T-cell (primary cell): ENCODE measurements at regions of chr12 and their contacts with region 1.

Region 1: DNA sequence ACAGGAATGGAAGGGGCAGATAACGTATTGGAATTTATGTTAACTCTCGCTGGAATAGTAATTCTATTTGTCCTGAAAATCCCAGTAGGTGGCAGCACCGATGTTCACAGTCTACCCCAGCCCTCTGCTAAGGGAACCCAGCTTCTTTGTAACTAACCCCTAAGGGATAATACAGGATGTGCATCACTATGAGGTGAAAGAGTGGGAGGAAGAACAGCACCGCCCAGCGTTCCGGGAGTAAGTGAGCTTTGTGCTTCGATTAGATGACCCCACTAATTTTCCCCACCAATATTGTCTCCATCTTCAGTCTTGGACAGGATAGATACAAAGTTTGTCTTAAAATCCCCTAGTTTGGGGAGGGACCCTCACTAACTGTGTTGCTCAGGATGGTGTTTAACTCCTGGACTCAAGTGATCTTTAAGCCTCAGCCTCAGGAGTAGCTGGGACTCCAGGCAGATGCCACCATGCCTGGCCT is 2.7 kb downstream of the SLC2A3 start:
- DNase-seq: peak; percentile 30 to 95 (median 71)
- ATAC-seq: peak; percentile 77 to 82 (median 79)
- H3K4me3 ChIP-seq: peak overlapping the region; percentile 90 to 99
- H3K4me3 Mint-ChIP-seq: no peak overlapping the region
- H3K27ac ChIP-seq: peak overlapping the region; percentile 80
- H3K27ac Mint-ChIP-seq: no peak overlapping the region
- H3K4me1 ChIP-seq: peaks cover 28 to 59% of the 10 kb centered on the region in 2 experiments
- H3K4me1 Mint-ChIP-seq: peaks cover 36 to 40% (median 37%) of the 10 kb centered on the region in 3 donors
- H3K27me3 ChIP-seq: no peaks in the 10 kb centered on the region
- H3K27me3 Mint-ChIP-seq: no peaks in the 10 kb centered on the region

Region 2: GRCh38 chr12:7915559-7916403 is 17.5 kb before region 1 on chr12:
- CTCF ChIA-PET with region 1: interaction called in 1 of 2 experiments, 7 read pairs
- POLR2A ChIA-PET with region 1: interaction called, 4 to 38 read pairs
- DNase-seq: peak in 1 of 35 experiments; percentile 45
- ATAC-seq: peak; percentile 22 to 47 (median 30)
- H3K4me3 ChIP-seq: no peak overlapping the region
- H3K4me3 Mint-ChIP-seq: peak overlapping the region in 2 of 3 donors; percentile 6 to 36
- H3K27ac ChIP-seq: no peak overlapping the region
- H3K27ac Mint-ChIP-seq: peak overlapping the region in 1 of 2 donors; percentile 28
- H3K4me1 ChIP-seq: peaks cover 0 to 24% of the 10 kb centered on the region in 2 experiments
- H3K4me1 Mint-ChIP-seq: peaks cover 25 to 31% (median 28%) of the 10 kb centered on the region in 3 donors
- H3K27me3 ChIP-seq: no peaks in the 10 kb centered on the region
- H3K27me3 Mint-ChIP-seq: no peaks in the 10 kb centered on the region

Region 3: GRCh38 chr12:7959701-7960121 is 26.4 kb after region 1 on chr12:
- CTCF ChIA-PET with region 1: interaction called, 21 to 222 read pairs
- POLR2A ChIA-PET with region 1: interaction called, 49 to 296 read pairs
- DNase-seq: peak in 31 of 35 experiments; percentile 8 to 74 (median 36)
- ATAC-seq: peak; percentile 42 to 57 (median 55)
- H3K4me3 ChIP-seq: peak overlapping the region; percentile 53 to 90
- H3K4me3 Mint-ChIP-seq: peak overlapping the region; percentile 81 to 87 (median 84)
- H3K27ac ChIP-seq: peak overlapping the region; percentile 87
- H3K27ac Mint-ChIP-seq: peak overlapping the region; percentile 92 to 93
- H3K4me1 ChIP-seq: peaks cover 28 to 34% of the 10 kb centered on the region in 2 experiments
- H3K4me1 Mint-ChIP-seq: peaks cover 38 to 52% (median 42%) of the 10 kb centered on the region in 3 donors
- H3K27me3 ChIP-seq: no peaks in the 10 kb centered on the region
- H3K27me3 Mint-ChIP-seq: no peaks in the 10 kb centered on the region

Region 4: DNA sequence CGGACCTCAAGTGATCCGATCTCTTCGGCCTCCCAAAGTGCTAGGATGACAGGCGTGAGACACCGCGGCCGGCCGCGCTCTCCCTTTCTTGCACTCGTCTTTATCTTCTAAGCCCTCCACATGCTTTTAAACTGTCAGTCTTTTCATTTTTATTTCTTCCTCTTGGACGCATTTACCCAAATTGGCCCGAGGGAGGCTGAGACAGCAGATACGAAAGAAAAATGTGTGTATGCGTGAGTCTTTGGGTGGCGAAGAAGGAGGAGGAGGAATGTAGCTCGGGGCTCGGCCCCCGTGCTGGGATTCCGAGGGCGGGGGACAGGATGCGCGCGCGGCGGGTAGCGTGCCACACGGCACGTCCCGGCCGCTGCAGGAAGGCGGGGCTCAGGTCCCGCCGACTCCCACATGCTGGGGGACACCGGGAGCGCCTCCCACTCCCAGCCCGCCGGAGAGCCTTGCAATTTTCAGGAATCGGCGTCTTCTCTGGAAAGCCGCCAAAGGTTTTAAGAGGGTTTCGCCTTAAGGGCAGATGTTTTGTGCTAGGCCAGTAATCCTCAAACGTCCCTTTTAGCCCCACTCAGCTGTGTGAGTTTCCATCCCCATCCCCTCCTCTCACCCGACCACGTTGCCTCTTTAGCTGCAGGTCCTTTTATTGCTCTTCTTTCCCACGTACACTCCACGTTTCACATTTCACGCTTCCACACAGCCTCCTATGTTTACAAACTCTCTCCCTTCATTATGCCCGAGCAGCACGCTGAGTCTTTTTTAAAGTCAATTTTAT is 37.4 kb after region 1 on chr12:
- CTCF ChIA-PET with region 1: interaction called in 1 of 2 experiments, 222 read pairs
- POLR2A ChIA-PET with region 1: interaction called, 4 to 62 read pairs
- DNase-seq: peak; percentile 68 to 95 (median 82)
- ATAC-seq: peak; percentile 86 to 98 (median 97)
- H3K4me3 ChIP-seq: peak overlapping the region; percentile 61 to 70
- H3K4me3 Mint-ChIP-seq: peak overlapping the region; percentile 81 to 89 (median 86)
- H3K27ac ChIP-seq: peak overlapping the region; percentile 95
- H3K27ac Mint-ChIP-seq: peak overlapping the region; percentile 94 to 96
- H3K4me1 ChIP-seq: peaks cover 2 to 31% of the 10 kb centered on the region in 2 experiments
- H3K4me1 Mint-ChIP-seq: peaks cover 24 to 33% (median 31%) of the 10 kb centered on the region in 3 donors
- H3K27me3 ChIP-seq: peaks cover 0 to 2% of the 10 kb centered on the region in 2 experiments
- H3K27me3 Mint-ChIP-seq: no peaks in the 10 kb centered on the region

Region 5: GRCh38 chr12:7995266-7995963 is 62.1 kb after region 1 on chr12:
- CTCF ChIA-PET with region 1: interaction called, 16 to 37 read pairs
- POLR2A ChIA-PET with region 1: interaction called, 8 to 19 read pairs
- DNase-seq: peak; percentile 47 to 87 (median 79)
- ATAC-seq: peak; percentile 99 to 100 (median 99)
- H3K4me3 ChIP-seq: no peak overlapping the region
- H3K4me3 Mint-ChIP-seq: no peak overlapping the region
- H3K27ac ChIP-seq: peak overlapping the region; percentile 36
- H3K27ac Mint-ChIP-seq: no peak overlapping the region
- H3K4me1 ChIP-seq: peaks cover 3 to 17% of the 10 kb centered on the region in 2 experiments
- H3K4me1 Mint-ChIP-seq: peaks cover 13 to 19% (median 14%) of the 10 kb centered on the region in 3 donors
- H3K27me3 ChIP-seq: peaks cover 0 to 2% of the 10 kb centered on the region in 2 experiments
- H3K27me3 Mint-ChIP-seq: no peaks in the 10 kb centered on the region

Region 6: DNA sequence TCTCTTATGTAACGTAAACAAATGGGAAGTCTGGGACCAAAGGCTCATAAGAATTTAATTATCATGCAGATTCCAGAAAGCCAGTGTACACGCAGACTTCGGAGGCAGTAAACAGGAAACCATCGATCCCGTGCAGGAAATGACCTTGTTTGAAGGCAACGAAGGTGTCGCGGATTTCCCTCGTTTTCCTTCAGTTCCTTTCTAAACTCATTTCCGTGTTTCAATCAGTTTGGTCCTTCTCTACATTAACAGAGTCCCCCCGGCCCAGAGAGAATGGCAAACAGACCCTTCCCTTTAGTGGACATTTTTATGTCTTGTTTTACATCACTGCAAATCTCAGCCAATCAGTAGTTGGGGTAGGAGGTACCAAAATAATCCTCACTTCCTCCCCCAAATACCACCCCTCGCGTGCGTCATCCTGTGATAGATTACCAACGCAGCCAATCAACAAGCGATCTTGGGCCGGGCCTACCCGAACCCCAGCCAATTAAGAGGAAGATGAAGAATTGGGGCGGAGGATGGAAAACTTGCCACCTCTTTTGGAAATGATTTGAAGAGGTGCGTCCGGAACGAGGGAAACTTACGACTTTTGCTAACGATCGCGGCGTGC is 93.1 kb after region 1 on chr12:
- CTCF ChIA-PET with region 1: interaction called in 1 of 2 experiments, 7 read pairs
- POLR2A ChIA-PET with region 1: interaction called, 3 to 17 read pairs
- DNase-seq: peak; percentile 90 to 98 (median 97)
- ATAC-seq: peak; percentile 92 to 96 (median 94)
- H3K4me3 ChIP-seq: peak overlapping the region; percentile 82 to 94
- H3K4me3 Mint-ChIP-seq: peak overlapping the region; percentile 89 to 97 (median 94)
- H3K27ac ChIP-seq: peak overlapping the region; percentile 100
- H3K27ac Mint-ChIP-seq: peak overlapping the region; percentile 97 to 98
- H3K4me1 ChIP-seq: peaks cover 2 to 20% of the 10 kb centered on the region in 2 experiments
- H3K4me1 Mint-ChIP-seq: peaks cover 14 to 19% (median 17%) of the 10 kb centered on the region in 3 donors
- H3K27me3 ChIP-seq: no peaks in the 10 kb centered on the region
- H3K27me3 Mint-ChIP-seq: no peaks in the 10 kb centered on the region